Natural killer cell (primary cell): ENCODE measurements at regions of chr9 and their contacts with region 1.

Region 1: DNA sequence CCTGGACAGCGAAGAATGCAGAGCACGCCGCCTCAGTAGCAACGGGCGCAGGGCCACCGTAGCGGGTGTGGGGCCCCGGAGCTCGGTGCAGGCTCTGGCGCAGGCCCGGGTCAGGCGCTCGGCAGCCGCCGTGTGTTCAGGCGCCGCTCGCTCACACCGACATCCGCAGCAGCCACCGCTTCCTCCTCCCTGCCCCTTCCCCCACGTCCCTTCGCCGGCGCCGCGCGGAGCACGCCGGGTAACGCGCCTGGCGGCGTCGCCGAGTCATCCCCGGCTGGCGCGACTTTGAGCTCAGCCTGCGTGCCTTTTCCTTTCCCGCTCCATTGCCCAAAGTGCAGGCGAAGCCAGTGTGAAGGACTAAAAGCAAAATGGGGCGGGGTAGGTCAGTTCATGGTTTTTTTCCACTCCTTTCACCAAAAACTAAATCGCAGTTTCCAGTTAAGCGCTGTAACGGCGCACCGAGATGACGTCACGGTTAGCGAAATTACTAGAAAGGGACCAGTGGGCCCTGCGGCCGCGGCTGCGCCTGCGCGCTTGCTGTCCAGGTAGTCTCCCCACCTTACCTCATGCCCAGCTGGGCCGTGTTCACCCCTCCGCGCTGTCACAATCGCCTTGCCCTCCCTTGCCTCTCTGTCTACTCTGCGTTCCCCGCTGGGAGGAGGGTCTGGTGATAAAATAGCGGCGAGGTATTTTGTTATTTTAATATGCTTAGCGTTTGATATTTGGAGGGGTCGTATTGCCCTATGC is at the start of gene UBQLN1:
- DNase-seq: peak; percentile 93 to 97
- ATAC-seq: peak; percentile 80 to 91 (median 86)
- H3K4me3 ChIP-seq: peak within 1 kb of the TSS; percentile 96
- H3K4me3 Mint-ChIP-seq: peak within 1 kb of the TSS; percentile 96
- H3K27ac ChIP-seq: peak within 1 kb of the TSS; percentile 91
- H3K27ac Mint-ChIP-seq: peak within 1 kb of the TSS; percentile 99 to 100
- H3K4me1 ChIP-seq: peaks cover 12% of the 10 kb centered on the region
- H3K4me1 Mint-ChIP-seq: peaks cover 31 to 32% of the 10 kb centered on the region in 2 donors
- H3K27me3 ChIP-seq: no peaks in the 10 kb centered on the region
- H3K27me3 Mint-ChIP-seq: peaks cover 0 to 2% of the 10 kb centered on the region in 2 donors
- CTCF ChIP-seq: no peak
- total RNA-seq, gene UBQLN1: 137 to 151 (median 141) TPM

Region 2: DNA sequence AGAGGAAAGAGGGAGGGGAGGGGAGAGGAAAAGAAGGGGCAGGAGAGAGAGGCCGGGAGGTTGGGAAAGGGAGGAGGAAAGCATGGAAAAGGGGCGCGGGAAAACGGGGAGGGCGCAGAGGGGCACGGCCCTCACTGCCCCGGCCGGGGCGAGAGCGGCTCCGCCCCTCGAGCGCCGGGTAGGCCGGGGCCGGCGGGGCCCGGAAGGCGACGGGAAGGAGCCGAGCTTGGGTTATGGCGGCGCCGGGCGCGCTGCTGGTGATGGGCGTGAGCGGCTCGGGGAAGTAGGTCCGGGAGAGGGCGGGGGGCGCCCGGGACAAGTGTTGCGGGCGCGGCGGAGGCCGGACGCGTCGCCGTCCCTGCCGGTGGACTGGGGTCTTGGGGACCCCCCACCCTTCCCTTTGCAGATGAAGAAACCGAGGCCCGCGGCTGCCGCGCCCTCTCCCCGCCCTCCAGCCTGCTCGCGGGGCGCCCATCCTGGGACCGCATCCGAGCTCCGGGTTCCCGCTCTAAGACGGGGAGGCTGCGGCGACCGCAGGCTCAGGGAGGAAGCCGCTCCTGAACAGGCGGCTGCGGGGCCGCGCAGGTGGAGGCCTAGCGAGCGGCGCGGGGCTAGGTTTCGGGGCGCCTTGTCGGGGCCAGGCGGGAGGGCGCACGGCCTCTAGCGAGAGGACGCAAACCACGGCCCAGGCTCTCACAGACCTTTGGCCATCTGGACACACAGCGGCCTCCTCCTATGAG is 84.8 kb before region 1 on chr9 and contains the start of gene IDNK:
- intact Hi-C with region 1: loop called (anchors 1 kb)
- DNase-seq: peak; percentile 58 to 81
- ATAC-seq: peak; percentile 90 to 93 (median 90)
- H3K4me3 ChIP-seq: peak within 1 kb of the TSS; percentile 72
- H3K4me3 Mint-ChIP-seq: peak within 1 kb of the TSS; percentile 97
- H3K27ac ChIP-seq: peak within 1 kb of the TSS; percentile 81
- H3K27ac Mint-ChIP-seq: peak within 1 kb of the TSS; percentile 90 to 96
- H3K4me1 ChIP-seq: peaks cover 20% of the 10 kb centered on the region
- H3K4me1 Mint-ChIP-seq: peaks cover 24 to 32% of the 10 kb centered on the region in 2 donors
- H3K27me3 ChIP-seq: no peaks in the 10 kb centered on the region
- H3K27me3 Mint-ChIP-seq: peaks cover 0 to 4% of the 10 kb centered on the region in 2 donors
- CTCF ChIP-seq: no peak
- total RNA-seq, gene IDNK: 12.5 to 13.5 (median 13.0) TPM

Region 3: GRCh38 chr9:83688921-83689320 is 19.0 kb before region 1 on chr9:
- intact Hi-C with region 1: no loop called
- DNase-seq: no peak
- ATAC-seq: no peak
- H3K4me3 ChIP-seq: no peak overlapping the region
- H3K4me3 Mint-ChIP-seq: peak overlapping the region; percentile 25
- H3K27ac ChIP-seq: no peak overlapping the region
- H3K27ac Mint-ChIP-seq: no peak overlapping the region
- H3K4me1 ChIP-seq: peaks cover 4% of the 10 kb centered on the region
- H3K4me1 Mint-ChIP-seq: peaks cover 68 to 70% of the 10 kb centered on the region in 2 donors
- H3K27me3 ChIP-seq: no peaks in the 10 kb centered on the region
- H3K27me3 Mint-ChIP-seq: no peaks in the 10 kb centered on the region
- CTCF ChIP-seq: no peak

Region 4: DNA sequence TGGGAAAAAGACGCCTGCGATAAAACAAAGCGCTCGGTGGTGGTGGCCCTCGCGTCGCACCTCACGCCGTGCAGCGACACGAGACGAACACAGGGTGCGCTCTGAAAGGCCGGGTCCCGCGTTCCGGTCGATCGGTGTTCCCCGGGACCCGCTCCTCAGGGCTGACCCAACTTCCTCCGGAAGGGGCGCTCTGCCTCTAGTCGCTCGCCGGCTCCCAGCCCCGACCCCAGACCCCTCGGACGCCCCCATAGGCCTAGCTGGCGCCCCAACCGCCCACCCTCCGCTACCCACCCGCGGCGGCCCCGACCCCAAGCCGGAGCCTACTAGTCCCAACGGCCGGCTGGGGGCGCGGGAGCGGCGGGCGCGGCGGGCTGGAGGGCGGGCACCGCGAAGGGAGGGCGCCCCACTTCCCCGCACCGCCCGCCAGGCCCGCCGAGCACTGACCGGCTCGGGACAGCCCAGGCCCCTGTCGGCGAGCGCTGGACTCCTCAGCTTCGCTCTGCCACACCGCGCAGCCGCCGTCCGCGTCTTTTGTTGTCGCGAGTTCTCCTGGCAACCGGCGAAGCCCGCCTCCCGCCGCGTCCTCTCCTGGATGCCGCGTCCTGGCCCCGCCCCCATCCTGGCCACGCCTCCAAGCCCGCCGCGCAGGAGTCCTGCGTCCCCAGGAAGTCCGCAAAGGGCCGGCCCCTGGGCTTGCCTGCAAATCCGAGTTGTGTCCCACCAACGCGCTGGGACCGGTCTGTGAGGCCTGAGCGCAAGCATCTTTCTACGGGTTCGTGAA is 213.2 kb after region 1 on chr9 and contains the start of gene KIF27:
- intact Hi-C with region 1: loop called (anchors 5 kb)
- DNase-seq: peak; percentile 96 to 98
- ATAC-seq: peak; percentile 89 to 98 (median 89)
- H3K4me3 ChIP-seq: peak within 1 kb of the TSS; percentile 78
- H3K4me3 Mint-ChIP-seq: peak within 1 kb of the TSS; percentile 94
- H3K27ac ChIP-seq: peak within 1 kb of the TSS; percentile 96
- H3K27ac Mint-ChIP-seq: peak within 1 kb of the TSS; percentile 92 to 93
- H3K4me1 ChIP-seq: peaks cover 12% of the 10 kb centered on the region
- H3K4me1 Mint-ChIP-seq: peaks cover 8 to 10% of the 10 kb centered on the region in 2 donors
- H3K27me3 ChIP-seq: no peaks in the 10 kb centered on the region
- H3K27me3 Mint-ChIP-seq: no peaks in the 10 kb centered on the region
- CTCF ChIP-seq: peak; percentile 54
- total RNA-seq, gene KIF27: 4.0 to 7.7 (median 4.6) TPM

Region 5: DNA sequence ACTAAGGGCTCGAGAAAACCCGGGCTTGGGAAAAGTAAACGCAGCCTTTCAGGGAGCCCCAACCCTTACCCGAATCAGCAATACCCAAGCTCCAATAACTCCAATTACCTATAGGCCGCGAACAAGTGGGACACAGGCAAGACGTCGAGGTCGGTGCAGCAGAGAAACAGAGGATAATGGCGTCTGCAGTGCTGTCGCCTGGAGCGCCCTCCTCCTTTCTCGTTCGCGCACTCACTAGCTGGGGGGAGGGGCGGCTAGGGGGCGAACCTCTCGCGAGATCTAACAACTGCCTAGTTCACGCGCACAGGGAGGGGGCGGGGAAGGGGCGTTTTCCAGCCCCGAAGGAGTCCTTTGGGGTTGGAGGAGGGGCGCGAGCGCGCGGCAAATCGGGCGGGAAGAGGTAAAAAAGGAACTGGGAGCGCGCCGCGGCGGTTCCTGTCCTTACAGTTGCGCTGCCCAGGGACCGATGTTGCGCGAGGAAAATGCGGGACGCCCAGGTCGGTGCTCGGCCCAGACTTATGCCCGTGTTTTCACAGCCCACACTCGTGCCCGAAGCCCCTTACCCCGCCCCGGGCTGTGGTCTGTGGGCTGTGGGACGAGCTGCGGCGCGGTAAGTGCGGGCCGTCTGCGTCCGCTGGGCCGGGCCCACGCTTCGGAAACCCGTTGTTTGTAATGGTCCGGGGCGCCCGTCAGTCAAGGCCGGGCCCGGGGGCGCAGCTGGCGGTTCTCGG is 272.6 kb after region 1 on chr9 and contains the start of gene RMI1:
- intact Hi-C with region 1: loop called (anchors 5 kb)
- DNase-seq: peak; percentile 97 to 99
- ATAC-seq: peak; percentile 77 to 92 (median 80)
- H3K4me3 ChIP-seq: peak within 1 kb of the TSS; percentile 96
- H3K4me3 Mint-ChIP-seq: peak within 1 kb of the TSS; percentile 95
- H3K27ac ChIP-seq: peak within 1 kb of the TSS; percentile 98
- H3K27ac Mint-ChIP-seq: peak within 1 kb of the TSS; percentile 100
- H3K4me1 ChIP-seq: peaks cover 6% of the 10 kb centered on the region
- H3K4me1 Mint-ChIP-seq: peaks cover 50 to 59% of the 10 kb centered on the region in 2 donors
- H3K27me3 ChIP-seq: no peaks in the 10 kb centered on the region
- H3K27me3 Mint-ChIP-seq: no peaks in the 10 kb centered on the region
- CTCF ChIP-seq: no peak
- total RNA-seq, gene RMI1: 2.8 to 5.4 (median 3.0) TPM